Head of caudate nucleus (tissue), 42 donors: ENCODE measurements at regions of chr5 and their contacts with region 1.

Region 1: DNA sequence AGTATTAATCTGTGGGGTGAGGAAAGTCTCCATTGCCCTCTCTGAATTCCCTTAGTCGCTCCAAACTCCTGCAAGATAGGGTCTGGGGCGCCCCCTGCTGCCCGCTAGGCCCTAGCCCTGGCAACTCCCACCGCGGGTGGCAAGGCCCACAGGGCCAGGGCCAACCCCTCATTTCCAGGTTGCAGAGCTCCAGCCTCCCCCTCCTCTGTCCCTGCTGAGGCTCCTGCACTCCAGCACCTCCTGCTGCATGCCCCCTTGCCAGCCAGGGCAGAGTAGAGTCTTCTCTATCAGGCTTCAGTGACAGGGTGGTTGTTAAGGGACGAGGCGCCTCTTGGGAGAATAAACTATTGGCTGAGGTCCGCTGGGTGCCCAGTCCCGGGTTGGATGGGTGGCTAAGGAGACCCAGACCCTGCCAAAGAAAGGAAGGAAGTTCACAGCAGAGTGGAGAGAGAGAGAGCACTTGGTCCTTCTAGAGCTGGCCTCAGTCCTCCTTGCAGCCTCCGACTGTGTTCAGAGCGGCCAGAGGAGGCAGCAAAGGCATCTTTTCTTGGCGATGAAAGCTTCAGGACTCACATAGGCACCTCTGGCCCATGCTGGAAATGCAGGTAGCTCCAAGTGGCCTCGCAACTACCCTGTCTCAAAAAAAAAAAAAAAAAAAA is 45.6 kb downstream of the SAR1B start:
- DNase-seq: peak; percentile 59 to 93 (median 82)

Region 2: GRCh38 chr5:134304311-134304710 is 282.7 kb before region 1 on chr5:
- intact Hi-C with region 1: loop called (anchors 10 kb)
- DNase-seq: no peak